Head of caudate nucleus (tissue), 42 donors: ENCODE measurements at regions of chr12 and their contacts with region 1.

Region 1: DNA sequence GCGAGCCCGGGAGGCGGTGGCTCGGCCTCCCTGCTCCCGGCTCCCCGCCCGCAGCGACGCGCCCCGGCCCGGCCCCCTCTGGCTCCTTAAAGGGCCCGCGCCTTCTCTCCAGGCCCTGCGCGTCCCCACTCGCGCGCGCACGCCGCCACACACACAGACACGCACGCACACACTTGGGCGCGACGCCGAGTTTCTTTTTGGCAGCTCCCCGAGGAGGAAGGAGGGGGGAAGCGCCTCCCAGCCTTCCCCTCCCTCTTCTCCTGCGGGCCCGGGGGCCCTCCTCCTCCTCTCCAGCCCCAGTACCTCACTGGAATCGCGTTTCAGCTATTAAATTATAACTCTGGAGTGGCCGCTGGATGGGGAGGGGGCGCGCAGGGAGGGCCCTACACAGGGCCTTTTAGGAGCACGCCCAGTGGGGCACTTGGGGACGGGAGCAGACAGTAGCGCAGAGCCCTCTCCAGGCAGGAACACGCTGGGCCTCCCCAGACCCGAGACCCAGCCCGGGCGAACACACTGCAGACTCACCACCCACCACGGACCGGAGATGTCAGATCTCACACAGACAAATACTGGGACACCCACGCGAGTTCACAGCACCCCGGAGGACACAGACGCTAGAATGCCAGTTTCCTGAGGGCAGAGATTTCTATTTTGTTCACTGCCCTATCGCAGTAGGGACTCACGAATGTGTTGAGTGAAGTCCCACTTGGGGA is 405 bp upstream of the NCOR2 start:
- DNase-seq: peak; percentile 78 to 97 (median 94)

Region 2: DNA sequence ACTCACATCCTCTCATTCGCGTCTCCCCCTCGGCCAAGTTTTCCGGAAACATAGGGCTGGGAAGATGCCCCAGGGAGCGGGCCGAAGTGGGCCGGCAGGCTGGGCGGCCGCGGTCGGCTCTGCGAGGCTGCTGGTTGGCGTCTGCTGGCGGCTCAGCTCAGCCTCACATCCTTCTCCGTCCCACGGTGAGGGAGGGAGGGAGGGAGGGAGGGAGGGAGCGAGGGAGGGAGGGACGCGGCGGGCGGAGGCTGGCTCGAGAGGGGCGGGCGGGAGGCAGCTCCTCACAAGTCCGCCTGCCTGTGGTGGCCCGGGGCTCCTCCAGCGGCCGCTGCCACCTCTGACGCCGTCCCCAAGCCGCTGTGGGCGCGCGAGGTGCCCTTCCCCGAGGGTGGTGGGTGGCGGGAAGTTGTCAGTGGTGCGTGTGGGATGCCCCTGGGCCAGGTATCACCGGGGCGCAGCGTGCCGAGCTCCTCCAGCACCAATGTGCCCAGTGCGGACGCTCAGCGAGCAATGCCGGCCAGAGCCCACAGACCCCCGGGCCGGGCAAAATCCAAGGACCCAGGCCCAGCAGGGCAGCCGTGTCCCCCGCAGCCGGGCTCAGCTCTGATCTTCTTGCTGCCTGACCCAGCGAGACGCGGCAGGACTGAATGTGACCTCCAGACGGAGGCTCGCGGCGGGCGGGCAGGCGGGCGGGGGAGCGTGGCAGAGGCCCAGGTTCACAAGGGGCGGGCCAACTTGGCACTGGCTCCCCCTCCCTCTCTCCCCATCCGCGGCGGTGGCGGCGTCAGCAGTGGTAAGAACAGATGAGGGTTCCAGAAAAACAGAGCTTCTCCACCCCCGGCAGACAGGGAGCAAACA is 178.9 kb before region 1 on chr12:
- intact Hi-C with region 1: loop called (anchors 5 kb)
- DNase-seq: peak; percentile 78 to 95 (median 89)

Region 3: GRCh38 chr12:124441443-124442194 is 126.2 kb before region 1 on chr12:
- intact Hi-C with region 1: no loop called
- DNase-seq: no peak

Region 4: GRCh38 chr12:124518051-124518932 is 49.5 kb before region 1 on chr12:
- intact Hi-C with region 1: loop called (anchors 2 kb)
- DNase-seq: peak; percentile 91 to 99 (median 97)

Region 5: GRCh38 chr12:124745891-124746570 is 178.2 kb after region 1 on chr12:
- intact Hi-C with region 1: loop called (anchors 5 kb)
- DNase-seq: peak; percentile 86 to 99 (median 96)

Region 6: DNA sequence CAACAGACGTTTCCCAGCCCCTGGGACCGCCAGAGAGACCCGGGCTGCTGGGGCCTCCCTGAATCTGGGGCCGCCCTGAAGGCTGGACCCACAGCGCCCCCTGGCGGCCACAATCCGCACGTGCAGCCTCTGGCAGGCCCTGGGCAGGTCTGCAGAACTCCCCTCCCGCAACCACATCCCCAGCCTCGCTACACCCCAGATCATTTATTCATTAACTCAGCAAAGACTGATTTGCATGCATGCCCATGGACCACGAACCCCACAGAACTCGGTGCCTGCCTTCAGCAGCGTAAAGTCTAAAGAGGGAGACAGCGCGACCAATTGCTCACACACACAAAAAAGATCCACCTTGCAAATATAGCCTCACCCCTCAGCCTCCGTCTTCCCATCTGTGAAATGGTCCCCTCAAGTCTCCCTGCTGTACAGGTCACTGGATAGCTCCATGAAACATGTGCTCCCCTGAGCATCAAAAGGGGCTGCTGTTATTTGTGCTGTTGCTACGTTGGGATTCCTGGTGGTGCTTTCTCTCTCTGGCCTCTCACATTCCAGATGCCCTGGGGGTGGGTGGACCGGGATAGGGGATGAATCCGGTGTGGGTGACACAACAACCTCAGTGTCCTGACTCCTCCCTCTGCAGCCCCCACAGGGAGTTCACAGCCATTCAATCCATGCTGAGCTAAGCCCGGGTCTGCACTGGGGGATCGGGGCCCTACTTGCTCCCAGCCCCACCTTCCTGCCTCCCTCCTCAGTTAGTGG is 199.4 kb after region 1 on chr12:
- intact Hi-C with region 1: loop called (anchors 5 kb)
- DNase-seq: peak; percentile 57 to 95 (median 86)